ENCODE measurements at regions of chr5 and their contacts with region 1.

Region 1: DNA sequence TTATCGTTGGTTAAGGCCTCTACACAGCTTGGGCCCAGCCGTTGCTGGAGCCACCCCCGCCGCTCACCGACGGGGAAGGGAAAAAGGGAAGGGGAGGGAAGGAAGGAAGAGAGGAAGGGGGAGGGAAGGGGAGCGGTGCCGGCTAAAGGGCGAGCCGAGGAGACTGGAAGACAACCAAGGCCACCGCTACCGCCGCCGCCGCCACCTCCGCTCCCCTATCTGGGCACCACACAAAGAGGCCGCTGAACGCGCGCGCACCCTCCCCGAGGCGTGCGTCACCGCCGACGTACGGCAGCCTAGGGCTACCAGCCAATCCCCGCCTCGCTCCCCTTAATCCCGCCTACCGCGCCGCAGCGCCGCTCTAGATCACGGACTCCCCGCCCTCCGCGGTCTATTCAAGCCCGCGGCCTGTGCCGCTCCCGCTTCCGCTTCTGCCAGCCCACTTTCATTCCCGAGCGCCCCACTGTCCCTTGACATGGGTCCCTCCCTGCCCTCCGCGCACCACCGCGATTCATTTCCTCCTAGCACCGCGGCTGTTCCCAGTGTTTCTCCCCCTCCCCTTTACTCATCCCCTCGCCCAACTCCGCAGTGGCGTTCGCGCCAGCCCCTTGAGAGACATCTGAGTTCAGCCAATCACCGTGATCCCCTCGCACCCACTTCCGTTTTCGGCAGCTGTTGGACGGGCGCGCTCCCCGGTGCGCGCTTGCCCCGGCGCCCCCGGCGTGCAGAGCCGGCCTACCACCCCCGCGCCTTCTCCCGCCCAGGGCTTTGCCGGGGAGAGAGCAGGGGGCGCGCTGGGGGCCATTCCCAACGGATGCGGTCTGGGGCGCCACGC is at the start of gene HNRNPA0:
- DNase-seq: peak; percentile 90 to 99 (median 98)
- ATAC-seq: peak; percentile 82
- H3K4me3 ChIP-seq: peak within 1 kb of the TSS; percentile 92 to 96
- H3K4me3 Mint-ChIP-seq: peak within 1 kb of the TSS; percentile 99
- H3K27ac ChIP-seq: peak within 1 kb of the TSS; percentile 98 to 100
- H3K27ac Mint-ChIP-seq: peak within 1 kb of the TSS; percentile 100
- H3K4me1 ChIP-seq: peaks cover 26% of the 10 kb centered on the region
- H3K4me1 Mint-ChIP-seq: peaks cover 32% of the 10 kb centered on the region
- H3K27me3 ChIP-seq: no peaks in the 10 kb centered on the region
- H3K27me3 Mint-ChIP-seq: no peaks in the 10 kb centered on the region
- CTCF ChIP-seq: no peak
- total RNA-seq, gene HNRNPA0: 53.7 to 57.0 TPM

Region 2: GRCh38 chr5:136132557-136133221 is 1621.7 kb before region 1 on chr5 and contains the start of gene SMAD5:
- CTCF ChIA-PET with region 1: no interaction called
- POLR2A ChIA-PET with region 1: no interaction called
- intact Hi-C with region 1: loop called in 1 of 2 experiments (anchors 5 kb)
- DNase-seq: peak; percentile 53 to 90 (median 79)
- ATAC-seq: peak; percentile 77
- H3K4me3 ChIP-seq: peak within 1 kb of the TSS; percentile 65 to 74
- H3K4me3 Mint-ChIP-seq: peak within 1 kb of the TSS; percentile 93
- H3K27ac ChIP-seq: peak within 1 kb of the TSS; percentile 49 to 51
- H3K27ac Mint-ChIP-seq: peak within 1 kb of the TSS; percentile 87
- H3K4me1 ChIP-seq: peaks cover 4% of the 10 kb centered on the region
- H3K4me1 Mint-ChIP-seq: peaks cover 37% of the 10 kb centered on the region
- H3K27me3 ChIP-seq: peaks cover 0 to 3% of the 10 kb centered on the region in 2 experiments
- H3K27me3 Mint-ChIP-seq: peaks cover 16% of the 10 kb centered on the region
- CTCF ChIP-seq: no peak
- total RNA-seq, gene SMAD5: 11.8 to 13.0 TPM

Region 3: DNA sequence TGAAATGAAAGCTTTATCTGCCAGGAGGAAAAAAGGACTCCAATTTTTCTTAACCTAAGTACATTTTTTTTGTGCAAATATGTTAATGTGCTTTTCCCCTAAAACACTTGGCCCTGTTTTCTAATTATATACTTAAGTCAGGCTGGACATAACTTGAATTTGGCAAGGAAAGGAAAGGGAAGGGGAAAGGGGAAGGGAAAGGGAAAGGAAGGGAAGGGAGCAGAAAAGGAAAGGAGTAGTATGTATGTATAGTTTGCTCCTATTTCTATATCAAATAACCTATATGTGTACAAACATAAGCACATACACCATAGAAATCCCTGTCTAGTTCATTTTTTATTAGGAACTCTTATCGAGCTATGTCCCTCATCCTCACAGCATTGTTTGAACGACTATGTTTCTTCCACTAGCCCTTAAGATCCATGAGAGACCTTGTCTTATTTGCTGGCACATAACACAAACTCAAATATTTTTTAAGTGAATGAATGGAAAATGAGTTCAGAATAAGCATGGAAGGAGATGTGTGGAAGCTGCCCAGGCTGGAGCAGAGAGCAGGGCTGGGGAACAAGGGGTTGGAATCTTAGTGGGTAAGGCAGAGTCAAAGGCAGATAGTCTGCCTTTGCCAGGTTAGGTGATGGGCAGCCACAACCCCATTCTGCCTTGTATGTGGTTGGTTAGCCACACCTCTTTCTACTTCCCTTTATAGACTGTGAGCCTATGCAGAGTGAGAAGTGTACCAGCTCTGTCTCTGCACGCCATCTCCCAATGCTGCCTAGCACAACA is 88.5 kb before region 1 on chr5:
- CTCF ChIA-PET with region 1: interaction called, 652 read pairs
- POLR2A ChIA-PET with region 1: interaction called, 11 read pairs
- intact Hi-C with region 1: no loop called
- DNase-seq: peak in 8 of 9 experiments; percentile 16 to 69 (median 44)
- ATAC-seq: peak; percentile 100
- H3K4me3 ChIP-seq: no peak overlapping the region
- H3K4me3 Mint-ChIP-seq: no peak overlapping the region
- H3K27ac ChIP-seq: no peak overlapping the region
- H3K27ac Mint-ChIP-seq: peak overlapping the region; percentile 11
- H3K4me1 ChIP-seq: peaks cover 12% of the 10 kb centered on the region
- H3K4me1 Mint-ChIP-seq: peaks cover 16% of the 10 kb centered on the region
- H3K27me3 ChIP-seq: no peaks in the 10 kb centered on the region
- H3K27me3 Mint-ChIP-seq: no peaks in the 10 kb centered on the region
- CTCF ChIP-seq: no peak

Region 4: DNA sequence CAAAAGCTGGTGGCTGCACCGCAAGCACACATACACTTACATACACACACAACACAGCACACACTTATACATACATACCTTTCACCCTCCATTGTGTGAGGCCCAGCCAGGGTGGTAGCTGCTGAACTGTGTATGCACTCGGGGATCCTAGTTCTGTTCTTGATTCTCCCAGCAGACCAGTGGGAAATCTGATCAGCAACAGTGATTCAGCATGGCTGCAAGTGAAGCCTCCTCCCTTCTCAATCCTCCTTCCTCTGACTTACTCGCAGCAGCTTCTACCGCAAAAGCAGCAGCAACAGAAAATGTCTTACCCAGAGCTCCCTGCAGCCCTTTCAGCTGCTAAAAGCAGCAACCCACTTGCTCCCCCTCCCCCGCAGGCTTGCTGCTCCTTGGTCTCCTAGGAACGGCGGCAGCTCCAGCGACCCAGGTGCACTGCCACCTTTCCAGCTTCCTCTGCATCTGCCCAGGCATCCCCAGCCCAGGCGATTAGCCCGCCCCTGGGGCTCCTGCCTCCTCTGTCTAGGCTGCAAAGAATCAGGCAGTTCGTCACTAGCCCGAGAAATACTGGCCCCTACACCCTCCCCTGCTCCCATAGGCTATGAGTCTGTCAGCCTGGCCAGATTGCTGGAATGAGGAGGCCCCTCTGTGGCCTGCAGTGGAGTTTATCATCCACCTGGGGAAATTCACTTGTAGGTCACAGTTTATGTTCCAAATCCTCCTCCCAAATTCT is 18.6 kb before region 1 on chr5 and contains the start of gene KLHL3:
- CTCF ChIA-PET with region 1: interaction called, 28 read pairs
- POLR2A ChIA-PET with region 1: interaction called, 38 read pairs
- intact Hi-C with region 1: loop called (anchors 1 to 2 kb)
- DNase-seq: peak in 7 of 9 experiments; percentile 24 to 68 (median 48)
- ATAC-seq: peak; percentile 37
- H3K4me3 ChIP-seq: peak within 1 kb of the TSS; percentile 69 to 83
- H3K4me3 Mint-ChIP-seq: no peak within 1 kb of the TSS
- H3K27ac ChIP-seq: peak within 1 kb of the TSS; percentile 41 to 45
- H3K27ac Mint-ChIP-seq: no peak within 1 kb of the TSS
- H3K4me1 ChIP-seq: peaks cover 61% of the 10 kb centered on the region
- H3K4me1 Mint-ChIP-seq: peaks cover 23% of the 10 kb centered on the region
- H3K27me3 ChIP-seq: no peaks in the 10 kb centered on the region
- H3K27me3 Mint-ChIP-seq: no peaks in the 10 kb centered on the region
- CTCF ChIP-seq: no peak
- total RNA-seq, gene KLHL3: 16.9 to 17.4 TPM

Region 5: GRCh38 chr5:137778772-137779564 is 24.6 kb after region 1 on chr5:
- CTCF ChIA-PET with region 1: interaction called, 11 read pairs
- POLR2A ChIA-PET with region 1: interaction called, 3 read pairs
- intact Hi-C with region 1: no loop called
- DNase-seq: peak in 2 of 9 experiments; percentile 39 to 52
- ATAC-seq: no peak
- H3K4me3 ChIP-seq: no peak overlapping the region
- H3K4me3 Mint-ChIP-seq: no peak overlapping the region
- H3K27ac ChIP-seq: no peak overlapping the region
- H3K27ac Mint-ChIP-seq: no peak overlapping the region
- H3K4me1 ChIP-seq: no peaks in the 10 kb centered on the region
- H3K4me1 Mint-ChIP-seq: no peaks in the 10 kb centered on the region
- H3K27me3 ChIP-seq: no peaks in the 10 kb centered on the region
- H3K27me3 Mint-ChIP-seq: no peaks in the 10 kb centered on the region
- CTCF ChIP-seq: peak; percentile 79

Region 6: DNA sequence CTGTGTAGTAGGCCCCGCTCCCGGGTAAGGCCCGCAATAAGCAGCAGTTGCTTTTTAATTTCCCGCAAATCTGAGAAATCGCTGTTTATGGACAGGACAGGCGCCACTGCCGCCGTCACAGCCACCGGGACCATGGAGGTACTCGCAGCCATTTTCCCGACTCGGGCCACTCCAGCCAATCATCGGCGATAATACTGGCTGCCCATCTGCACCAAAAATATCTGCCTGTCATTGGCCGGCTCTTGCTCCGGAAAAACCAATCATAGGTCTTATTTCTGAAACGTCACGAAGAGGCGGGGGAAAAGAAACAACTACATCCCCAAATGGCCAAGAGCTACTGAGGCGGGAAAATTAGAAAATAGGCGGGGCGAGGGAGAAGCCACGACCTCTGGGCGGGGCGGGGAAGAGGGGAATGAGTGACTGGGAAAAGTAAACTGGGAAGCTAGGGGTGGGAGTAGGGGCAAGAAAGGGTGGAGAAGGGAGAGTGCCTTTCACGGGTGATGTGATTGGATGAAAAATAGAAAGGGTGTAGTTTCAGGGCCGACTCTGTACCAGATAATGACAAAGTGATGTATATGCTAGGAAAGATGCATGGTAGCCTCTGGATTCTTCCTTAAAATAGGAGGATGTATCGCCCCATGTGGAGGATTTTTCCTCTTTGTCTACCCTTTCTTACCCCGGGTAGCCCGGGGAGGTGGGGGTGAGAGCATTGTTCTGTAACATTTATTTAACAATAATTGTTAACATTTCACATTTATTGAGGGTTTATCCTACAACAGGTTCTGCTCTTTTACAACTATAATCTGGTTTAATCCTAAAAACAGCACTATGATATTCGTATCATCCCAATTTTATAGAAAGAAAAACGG is 459.1 kb after region 1 on chr5 and contains the start of gene CDC23:
- CTCF ChIA-PET with region 1: no interaction called
- POLR2A ChIA-PET with region 1: no interaction called
- intact Hi-C with region 1: loop called in 1 of 2 experiments (anchors 5 kb)
- DNase-seq: peak; percentile 76 to 97 (median 89)
- ATAC-seq: peak; percentile 97
- H3K4me3 ChIP-seq: peak within 1 kb of the TSS; percentile 91 to 93
- H3K4me3 Mint-ChIP-seq: peak within 1 kb of the TSS; percentile 100
- H3K27ac ChIP-seq: peak within 1 kb of the TSS; percentile 81 to 86
- H3K27ac Mint-ChIP-seq: peak within 1 kb of the TSS; percentile 98
- H3K4me1 ChIP-seq: peaks cover 18% of the 10 kb centered on the region
- H3K4me1 Mint-ChIP-seq: peaks cover 21% of the 10 kb centered on the region
- H3K27me3 ChIP-seq: no peaks in the 10 kb centered on the region
- H3K27me3 Mint-ChIP-seq: peaks cover 2% of the 10 kb centered on the region
- CTCF ChIP-seq: no peak
- total RNA-seq, gene CDC23: 18.2 to 20.5 TPM

Region 7: GRCh38 chr5:138352071-138352721 is 597.9 kb after region 1 on chr5 and contains the start of gene KDM3B:
- CTCF ChIA-PET with region 1: no interaction called
- POLR2A ChIA-PET with region 1: interaction called, 5 read pairs
- intact Hi-C with region 1: loop called (anchors 5 kb)
- DNase-seq: peak; percentile 86 to 96 (median 92)
- ATAC-seq: peak; percentile 89
- H3K4me3 ChIP-seq: peak within 1 kb of the TSS; percentile 87 to 97
- H3K4me3 Mint-ChIP-seq: peak within 1 kb of the TSS; percentile 97
- H3K27ac ChIP-seq: peak within 1 kb of the TSS; percentile 83 to 89
- H3K27ac Mint-ChIP-seq: peak within 1 kb of the TSS; percentile 97
- H3K4me1 ChIP-seq: peaks cover 34% of the 10 kb centered on the region
- H3K4me1 Mint-ChIP-seq: peaks cover 47% of the 10 kb centered on the region
- H3K27me3 ChIP-seq: no peaks in the 10 kb centered on the region
- H3K27me3 Mint-ChIP-seq: no peaks in the 10 kb centered on the region
- CTCF ChIP-seq: peak; percentile 99
- total RNA-seq, gene KDM3B: 60.2 to 60.3 TPM